Breast epithelium (tissue), 4 donors: ENCODE measurements at regions of chr17 and their contacts with region 1.

Region 1: DNA sequence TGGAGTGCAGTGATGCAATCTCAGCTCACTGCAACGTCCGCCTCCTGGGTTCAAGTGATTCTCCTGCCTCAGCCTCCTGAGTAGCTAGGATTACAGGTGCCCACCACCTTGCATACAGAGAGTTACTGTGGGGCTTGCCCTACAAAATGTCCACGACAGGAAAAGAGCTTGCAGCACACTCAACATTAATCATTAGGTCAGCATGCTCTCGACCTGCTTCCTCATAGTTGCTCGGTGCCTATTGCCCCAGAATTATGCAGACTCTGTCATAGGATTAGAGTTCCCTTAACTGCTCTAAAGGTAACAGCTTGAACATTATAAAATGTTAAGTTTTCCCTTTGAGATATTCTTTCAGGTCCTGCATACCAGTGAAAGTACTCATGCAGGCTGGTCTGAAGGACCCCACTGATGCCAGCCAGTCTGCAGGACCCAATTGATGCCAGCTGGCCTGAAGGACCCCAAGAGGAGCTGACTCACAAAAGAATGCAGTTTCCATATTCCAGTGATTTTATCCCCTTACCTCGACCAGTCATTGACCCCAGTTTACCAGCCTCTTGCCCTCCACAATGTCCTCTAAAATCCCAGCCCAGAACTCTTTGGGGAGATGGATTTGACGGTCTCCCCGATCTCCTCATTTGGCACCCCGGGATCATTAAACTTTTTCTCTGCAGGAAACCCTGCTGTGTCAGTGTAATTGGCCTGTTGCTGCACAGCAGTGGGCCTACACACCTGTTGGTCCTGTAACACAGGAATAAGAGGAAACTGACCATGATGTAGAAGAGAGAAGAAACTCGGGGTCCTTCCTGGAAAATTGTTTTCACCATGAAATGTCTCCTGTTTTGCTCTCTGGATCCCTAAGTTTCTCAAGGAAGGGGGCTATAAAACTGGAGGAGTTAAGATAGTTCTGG is 10.7 kb downstream of the ICAM2 start:
- DNase-seq: no peak
- H3K4me3 ChIP-seq: no peak overlapping the region
- H3K27ac ChIP-seq: no peak overlapping the region
- H3K4me1 ChIP-seq: no peaks in the 10 kb centered on the region
- H3K27me3 ChIP-seq: no peaks in the 10 kb centered on the region
- CTCF ChIP-seq: no peak
- POLR2A ChIP-seq: no peak

Region 2: GRCh38 chr17:63516910-63517824 is 492.6 kb before region 1 on chr17:
- intact Hi-C with region 1: loop called (anchors 5 kb)
- DNase-seq: no peak
- H3K4me3 ChIP-seq: no peak overlapping the region
- H3K27ac ChIP-seq: no peak overlapping the region
- H3K4me1 ChIP-seq: no peaks in the 10 kb centered on the region
- H3K27me3 ChIP-seq: no peaks in the 10 kb centered on the region
- CTCF ChIP-seq: no peak
- POLR2A ChIP-seq: no peak

Region 3: GRCh38 chr17:63785556-63785955 is 224.2 kb before region 1 on chr17:
- intact Hi-C with region 1: no loop called
- DNase-seq: no peak
- H3K4me3 ChIP-seq: no peak overlapping the region
- H3K27ac ChIP-seq: no peak overlapping the region
- H3K4me1 ChIP-seq: no peaks in the 10 kb centered on the region
- H3K27me3 ChIP-seq: no peaks in the 10 kb centered on the region
- CTCF ChIP-seq: no peak
- POLR2A ChIP-seq: no peak

Region 4: GRCh38 chr17:63972796-63973195 is 37.0 kb before region 1 on chr17 and contains the start of gene SCN4A:
- intact Hi-C with region 1: loop called (anchors 1 kb)
- DNase-seq: no peak
- H3K4me3 ChIP-seq: no peak within 1 kb of the TSS
- H3K27ac ChIP-seq: no peak within 1 kb of the TSS
- H3K4me1 ChIP-seq: no peaks in the 10 kb centered on the region
- H3K27me3 ChIP-seq: no peaks in the 10 kb centered on the region
- CTCF ChIP-seq: no peak
- POLR2A ChIP-seq: no peak
- total RNA-seq, gene SCN4A: 1.0 to 16.7 (median 10.2) TPM

Region 5: DNA sequence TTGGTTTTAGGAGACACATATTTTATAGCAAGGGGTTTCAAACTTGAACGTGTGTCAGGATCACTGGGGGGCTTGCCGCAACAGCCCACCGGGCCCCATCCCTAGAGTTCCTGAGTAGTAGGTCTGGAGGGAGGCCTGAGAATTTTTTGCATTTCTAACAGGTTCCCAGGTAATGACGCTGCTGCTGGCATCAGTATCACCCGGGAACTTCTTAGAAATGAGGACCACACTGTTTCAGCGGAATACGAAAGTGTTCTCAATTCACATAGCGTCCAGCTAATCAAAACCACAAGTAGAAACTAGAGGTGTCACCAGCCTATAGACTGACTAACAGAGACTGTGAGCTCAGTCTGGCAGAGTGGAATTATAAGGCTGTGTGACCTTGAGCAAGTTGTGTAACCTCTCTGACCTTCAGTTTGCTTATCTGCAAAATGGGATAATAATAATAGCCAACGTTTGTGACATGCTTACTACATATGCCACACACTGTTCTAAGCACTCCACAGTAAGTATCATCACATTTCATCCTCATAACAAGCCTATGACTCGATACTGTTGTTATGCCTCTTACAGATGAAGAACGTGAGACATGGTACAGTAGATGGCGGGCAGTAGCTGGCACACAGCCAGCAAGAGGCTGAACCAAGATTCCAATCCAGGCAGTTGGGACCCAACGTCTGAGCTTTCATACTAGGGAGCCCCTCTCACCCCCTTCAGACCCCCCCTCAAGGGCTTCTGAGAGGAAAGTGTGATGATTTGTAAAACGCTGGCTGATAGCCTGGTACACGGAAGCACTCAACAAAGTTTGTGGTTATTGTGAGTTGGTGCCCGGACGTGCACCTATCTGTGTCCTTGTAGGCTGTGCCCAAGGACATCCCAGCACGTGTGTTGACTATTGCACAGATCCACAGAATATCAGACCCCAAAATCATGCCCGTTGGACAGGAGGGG is 15.3 kb after region 1 on chr17:
- intact Hi-C with region 1: loop called (anchors 1 kb)
- DNase-seq: no peak
- H3K4me3 ChIP-seq: peak overlapping the region in 1 of 3 donors; percentile 42
- H3K27ac ChIP-seq: peak overlapping the region in 1 of 2 donors; percentile 27
- H3K4me1 ChIP-seq: no peaks in the 10 kb centered on the region
- H3K27me3 ChIP-seq: no peaks in the 10 kb centered on the region
- CTCF ChIP-seq: no peak
- POLR2A ChIP-seq: no peak

Region 6: GRCh38 chr17:65618516-65618915 is 1608.8 kb after region 1 on chr17:
- intact Hi-C with region 1: no loop called
- DNase-seq: no peak
- H3K4me3 ChIP-seq: no peak overlapping the region
- H3K27ac ChIP-seq: no peak overlapping the region
- H3K4me1 ChIP-seq: no peaks in the 10 kb centered on the region
- H3K27me3 ChIP-seq: no peaks in the 10 kb centered on the region
- CTCF ChIP-seq: no peak
- POLR2A ChIP-seq: no peak